ENCODE measurements at regions of chr22 and their contacts with region 1.

Region 1: DNA sequence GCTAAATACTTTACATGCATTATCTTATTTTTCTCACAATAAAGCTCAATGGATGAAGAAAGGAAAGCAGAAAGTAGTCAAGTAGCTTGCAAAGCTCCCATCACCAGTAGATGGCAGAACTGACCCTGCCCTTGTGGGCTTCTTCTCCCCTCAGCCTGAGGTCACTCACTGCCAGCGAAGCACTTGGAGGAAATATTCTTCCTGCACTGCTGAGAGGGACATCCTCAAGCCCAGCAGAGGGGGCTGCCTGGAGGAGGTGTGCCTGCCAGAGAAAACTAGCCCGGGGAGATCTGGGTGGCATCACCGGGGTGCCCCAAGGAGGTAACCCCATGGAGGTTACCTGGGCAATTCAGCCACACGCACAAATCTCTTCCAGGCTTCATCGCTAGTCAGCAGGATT is 6.6 kb downstream of the APOL4 start:
- DNase-seq: peak; percentile 83

Region 2: DNA sequence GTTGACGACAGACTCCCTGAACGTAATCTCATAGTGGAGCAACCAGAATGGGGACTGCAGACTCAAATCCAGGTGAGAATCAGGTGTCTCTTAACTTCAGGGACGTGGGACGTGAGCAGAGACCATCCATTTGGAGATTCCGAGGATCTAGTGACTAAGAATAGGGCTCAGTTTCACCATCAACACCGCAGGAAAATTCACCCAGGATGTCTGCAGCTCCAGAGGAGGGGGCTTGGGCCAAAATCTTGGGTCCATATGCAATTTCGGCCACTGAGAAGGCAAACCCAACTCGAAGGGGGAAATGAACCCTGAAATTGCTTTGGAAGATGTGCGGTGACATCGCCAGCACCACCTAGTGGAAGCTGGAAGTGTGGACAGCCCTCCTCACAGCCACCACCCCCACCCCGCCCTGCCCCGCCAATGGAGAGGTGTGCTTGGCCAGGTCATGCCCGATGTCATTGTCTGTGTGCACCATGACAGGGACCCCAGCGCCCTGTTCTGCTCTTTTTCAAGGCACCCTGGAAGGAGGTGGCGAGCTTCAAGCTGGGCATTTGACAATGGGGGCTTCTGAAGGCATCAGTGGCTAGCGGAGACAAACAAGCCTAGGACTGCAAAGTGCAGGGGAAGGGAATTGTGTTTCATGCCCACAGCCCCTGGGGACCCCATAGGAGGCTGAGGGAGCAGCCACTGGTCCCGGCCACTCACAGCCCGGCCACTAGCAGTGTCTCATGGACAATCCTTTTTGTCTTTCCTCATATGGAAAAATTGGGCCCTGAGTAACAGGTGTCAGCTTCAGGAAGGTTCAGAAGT is 82.7 kb after region 1 on chr22:
- intact Hi-C with region 1: loop called (anchors 5 to 10 kb)
- DNase-seq: peak; percentile 82

Region 3: GRCh38 chr22:36350751-36351594 is 156.0 kb after region 1 on chr22:
- intact Hi-C with region 1: no loop called
- DNase-seq: no peak

Region 4: GRCh38 chr22:36493690-36494110 is 298.7 kb after region 1 on chr22:
- intact Hi-C with region 1: loop called in 1 of 2 experiments (anchors 10 kb)
- DNase-seq: no peak

Region 5: GRCh38 chr22:36823186-36823839 is 628.3 kb after region 1 on chr22:
- intact Hi-C with region 1: no loop called
- DNase-seq: no peak